Esophagus squamous epithelium (tissue), 5 donors: ENCODE measurements at regions of chr20 and their contacts with region 1.

Region 1: DNA sequence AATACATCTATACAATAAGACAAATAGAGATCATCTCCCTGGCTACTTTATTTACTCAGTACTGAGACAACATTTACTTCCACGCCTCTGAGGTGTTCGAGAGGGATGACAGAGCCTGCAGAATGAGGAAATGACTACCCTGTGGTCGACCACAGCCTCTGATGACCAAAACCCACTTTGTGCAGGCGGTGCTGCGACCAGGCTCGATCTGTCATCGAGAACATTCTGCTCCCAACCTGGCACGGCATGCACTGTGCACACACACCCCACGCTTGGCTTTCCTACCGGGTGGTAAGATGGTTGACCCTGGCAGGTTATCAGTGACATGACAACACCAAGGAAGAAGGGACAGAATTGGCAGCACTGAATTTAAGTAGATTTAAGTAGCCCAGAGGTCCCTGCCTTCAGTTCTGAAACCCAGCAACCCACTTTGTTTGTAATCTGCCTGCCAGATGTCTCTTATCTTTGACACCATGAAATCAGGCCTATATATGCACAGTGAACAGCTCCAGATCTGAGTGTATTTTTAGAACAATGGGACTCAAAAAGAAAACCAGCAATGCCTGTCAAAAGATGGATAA is 42.6 kb downstream of the TTI1 start:
- DNase-seq: peak; percentile 39
- H3K4me3 ChIP-seq: no peak overlapping the region
- H3K27ac ChIP-seq: peak overlapping the region; percentile 10 to 46 (median 32)
- H3K4me1 ChIP-seq: peaks cover 4 to 78% (median 35%) of the 10 kb centered on the region in 3 donors
- H3K27me3 ChIP-seq: no peaks in the 10 kb centered on the region
- CTCF ChIP-seq: no peak
- POLR2A ChIP-seq: no peak

Region 2: GRCh38 chr20:37564388-37565133 is 426.1 kb before region 1 on chr20:
- intact Hi-C with region 1: loop called (anchors 5 kb)
- DNase-seq: no peak
- H3K4me3 ChIP-seq: peak overlapping the region in 1 of 4 donors; percentile 23
- H3K27ac ChIP-seq: no peak overlapping the region
- H3K4me1 ChIP-seq: peaks cover 0 to 17% (median 10%) of the 10 kb centered on the region in 3 donors
- H3K27me3 ChIP-seq: peaks cover 0 to 90% (median 0%) of the 10 kb centered on the region in 4 donors
- CTCF ChIP-seq: peak; percentile 69 to 90 (median 84)
- POLR2A ChIP-seq: no peak

Region 3: DNA sequence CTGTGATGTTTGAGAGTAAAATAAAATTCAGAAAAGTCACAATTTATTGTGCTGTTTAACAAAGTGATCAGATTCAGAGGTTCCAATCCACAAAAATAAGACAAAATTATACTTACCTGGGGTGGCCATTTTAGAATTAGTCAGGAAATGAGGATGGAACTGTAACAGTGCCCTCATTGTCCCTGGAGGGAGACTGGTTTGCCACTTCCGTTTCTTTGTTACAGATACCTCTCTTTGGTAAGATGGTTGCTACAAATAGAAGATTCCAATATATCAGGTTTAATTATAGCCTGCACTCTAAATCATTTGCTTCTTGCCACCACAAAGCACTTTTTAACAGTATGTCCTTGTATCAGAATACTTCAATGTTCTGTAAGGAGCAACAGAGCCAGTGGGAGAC is 201.3 kb before region 1 on chr20:
- intact Hi-C with region 1: no loop called
- DNase-seq: no peak
- H3K4me3 ChIP-seq: no peak overlapping the region
- H3K27ac ChIP-seq: no peak overlapping the region
- H3K4me1 ChIP-seq: no peaks in the 10 kb centered on the region
- H3K27me3 ChIP-seq: no peaks in the 10 kb centered on the region
- CTCF ChIP-seq: no peak
- POLR2A ChIP-seq: no peak